Gastrocnemius medialis (tissue), 4 donors: ENCODE measurements at regions of chr15 and their contacts with region 1.

Region 1: DNA sequence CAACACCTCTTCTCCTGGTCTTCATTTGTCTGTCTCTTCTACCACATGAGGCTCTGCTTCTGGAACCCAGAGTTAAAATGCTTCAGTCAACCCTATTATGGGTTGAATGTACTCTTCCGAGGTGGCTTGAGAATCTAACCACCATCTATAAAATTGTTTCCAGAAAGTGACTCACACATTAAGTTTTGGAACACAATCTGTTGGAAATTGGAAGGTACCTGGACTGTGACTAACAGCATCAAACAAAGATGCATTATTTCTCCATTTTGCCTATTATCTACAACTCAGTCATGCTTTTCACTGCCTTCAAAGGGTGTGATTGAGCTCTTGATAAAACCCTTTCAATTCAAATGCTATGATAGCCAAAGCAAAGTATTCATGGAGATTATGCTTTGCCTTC is 499.0 kb upstream of the SEMA6D start:
- DNase-seq: no peak
- ATAC-seq: no peak
- H3K4me3 ChIP-seq: no peak overlapping the region
- H3K27ac ChIP-seq: no peak overlapping the region
- H3K4me1 ChIP-seq: no peaks in the 10 kb centered on the region
- H3K27me3 ChIP-seq: no peaks in the 10 kb centered on the region
- CTCF ChIP-seq: no peak
- POLR2A ChIP-seq: no peak

Region 2: GRCh38 chr15:47839233-47839825 is 621.0 kb after region 1 on chr15:
- in situ Hi-C with region 1: no loop called
- intact Hi-C with region 1: loop called (anchors 10 kb)
- DNase-seq: no peak
- ATAC-seq: peak; percentile 30 to 69
- H3K4me3 ChIP-seq: no peak overlapping the region
- H3K27ac ChIP-seq: no peak overlapping the region
- H3K4me1 ChIP-seq: peaks cover 3 to 6% of the 10 kb centered on the region in 2 donors
- H3K27me3 ChIP-seq: no peaks in the 10 kb centered on the region
- CTCF ChIP-seq: no peak
- POLR2A ChIP-seq: no peak